ENCODE measurements at regions of chr14 and their contacts with region 1.

Region 1: DNA sequence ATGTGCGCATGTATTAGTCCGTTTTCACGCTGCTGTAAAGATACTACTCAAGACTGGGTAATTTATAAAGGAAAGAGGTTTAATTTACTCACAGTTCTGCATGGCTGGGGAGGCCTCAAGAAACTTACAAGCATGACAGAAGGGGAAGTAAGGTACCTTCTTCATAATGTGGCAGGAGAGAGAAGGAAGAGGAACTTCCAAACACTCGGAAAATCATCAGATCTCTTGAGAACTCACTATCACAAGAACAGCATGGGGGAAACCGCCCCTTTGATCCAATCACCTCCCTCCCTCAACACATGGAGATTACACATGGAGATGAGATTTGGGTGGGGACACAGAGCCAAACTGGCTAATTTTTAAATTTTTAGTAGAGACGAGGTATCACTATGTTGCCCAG is 41.8 kb upstream of the SNX6 start:
- DNase-seq: no peak
- H3K4me3 ChIP-seq: no peak overlapping the region
- H3K27ac ChIP-seq: peak overlapping the region in 1 of 59 donors; percentile 71
- H3K27me3 ChIP-seq: no peaks in the 10 kb centered on the region
- CTCF ChIP-seq: no peak

Region 2: GRCh38 chr14:34387974-34388516 is 283.7 kb before region 1 on chr14:
- intact Hi-C with region 1: no loop called
- DNase-seq: no peak
- H3K4me3 ChIP-seq: no peak overlapping the region
- H3K27ac ChIP-seq: no peak overlapping the region
- H3K27me3 ChIP-seq: peaks cover 0 to 10% (median 0%) of the 10 kb centered on the region in 45 donors
- CTCF ChIP-seq: no peak

Region 3: DNA sequence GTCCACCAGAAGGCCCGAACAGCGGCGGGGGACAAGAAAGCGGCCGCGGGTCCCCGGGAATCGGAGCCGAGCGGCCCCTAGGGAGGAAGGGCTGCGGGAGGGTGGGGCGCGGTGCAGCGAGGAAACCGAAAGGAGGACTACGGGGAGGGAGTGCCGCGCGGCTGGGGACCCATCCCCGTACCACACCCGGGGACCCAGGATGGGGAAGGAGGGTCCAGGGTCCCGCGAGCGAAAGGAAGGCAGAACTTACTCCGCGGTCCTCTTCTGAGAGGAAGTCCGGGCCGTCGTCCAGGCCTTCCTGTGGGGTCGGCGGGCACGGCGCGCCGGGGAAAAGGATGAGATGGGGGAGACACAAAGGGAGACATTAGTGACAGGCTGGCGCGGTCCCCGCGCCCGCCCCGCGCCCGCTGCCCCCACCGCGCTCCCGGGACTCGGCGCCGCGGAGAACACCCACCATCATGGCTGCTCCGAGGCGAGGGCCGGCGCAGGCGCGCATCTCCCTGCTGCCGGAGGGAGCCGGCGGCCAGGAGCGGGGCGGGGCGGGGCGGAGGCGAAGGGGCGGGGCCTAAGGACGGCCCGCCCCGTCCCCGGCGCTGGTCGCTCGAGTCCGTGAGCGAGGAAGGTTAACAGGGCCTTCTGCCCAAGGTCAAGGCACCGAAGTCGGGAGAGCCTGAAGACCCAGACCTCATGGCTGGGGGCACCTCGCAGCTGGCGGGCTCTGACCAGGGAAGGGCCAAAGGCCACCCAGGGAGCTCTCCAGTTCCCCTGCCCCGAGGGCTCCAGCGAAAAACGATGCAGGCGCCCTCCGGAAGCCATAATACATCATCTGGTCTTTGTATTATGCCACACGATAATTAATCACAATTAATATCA is 41.8 kb before region 1 on chr14 and contains the start of gene SNX6:
- intact Hi-C with region 1: loop called in 1 of 2 experiments (anchors 5 kb)
- DNase-seq: peak; percentile 68 to 91 (median 82)
- H3K4me3 ChIP-seq: peak within 1 kb of the TSS; percentile 80 to 100 (median 96)
- H3K27ac ChIP-seq: peak within 1 kb of the TSS; percentile 11 to 98 (median 95)
- H3K27me3 ChIP-seq: no peaks in the 10 kb centered on the region
- CTCF ChIP-seq: peak in 13 of 56 donors; percentile 4 to 39 (median 18)
- total RNA-seq, gene SNX6: 34.3 to 83.7 (median 49.3) TPM

Region 4: GRCh38 chr14:34875031-34875922 is 203.6 kb after region 1 on chr14 and contains the start of gene BAZ1A:
- intact Hi-C with region 1: loop called in 1 of 2 experiments (anchors 2 kb)
- DNase-seq: peak in 4 of 10 donors; percentile 4 to 59 (median 22)
- H3K4me3 ChIP-seq: peak within 1 kb of the TSS; percentile 61 to 93 (median 84)
- H3K27ac ChIP-seq: peak within 1 kb of the TSS; percentile 73 to 99 (median 94)
- H3K27me3 ChIP-seq: no peaks in the 10 kb centered on the region
- CTCF ChIP-seq: peak in 23 of 56 donors; percentile 7 to 45 (median 19)
- total RNA-seq, gene BAZ1A: 3.8 to 20.1 (median 9.0) TPM